ENCODE measurements at regions of chr7 and their contacts with region 1.

Region 1: GRCh38 chr7:25851332-25852210 is 300.4 kb upstream of the NFE2L3 start:
- DNase-seq: peak; percentile 79
- H3K4me3 ChIP-seq: peak overlapping the region; percentile 43
- H3K27ac ChIP-seq: peak overlapping the region; percentile 86
- H3K4me1 ChIP-seq: peaks cover 54% of the 10 kb centered on the region
- H3K27me3 ChIP-seq: peaks cover 73% of the 10 kb centered on the region
- CTCF ChIP-seq: peak; percentile 83

Region 2: DNA sequence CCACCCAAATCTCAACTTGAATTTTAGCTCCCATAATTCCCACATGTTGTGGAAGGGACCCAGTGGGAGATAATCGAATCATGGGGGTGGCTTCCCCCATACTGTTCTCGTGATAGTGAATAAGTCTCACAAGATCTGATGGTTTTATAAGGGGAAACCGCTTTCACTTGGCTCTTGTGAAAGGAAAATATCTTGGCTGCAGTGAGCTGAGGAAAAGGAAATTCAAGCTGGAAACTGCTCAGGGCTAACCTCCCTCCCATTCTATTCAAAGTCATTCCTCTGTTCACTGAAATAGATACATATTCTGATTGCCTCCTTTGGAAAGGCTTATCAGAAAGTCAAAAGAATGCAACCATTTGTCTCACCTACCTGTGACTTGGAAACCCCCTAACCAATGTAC is 742.3 kb before region 1 on chr7:
- intact Hi-C with region 1: no loop called
- DNase-seq: no peak
- H3K4me3 ChIP-seq: no peak overlapping the region
- H3K27ac ChIP-seq: no peak overlapping the region
- H3K4me1 ChIP-seq: peaks cover 4% of the 10 kb centered on the region
- H3K27me3 ChIP-seq: no peaks in the 10 kb centered on the region
- CTCF ChIP-seq: no peak

Region 3: DNA sequence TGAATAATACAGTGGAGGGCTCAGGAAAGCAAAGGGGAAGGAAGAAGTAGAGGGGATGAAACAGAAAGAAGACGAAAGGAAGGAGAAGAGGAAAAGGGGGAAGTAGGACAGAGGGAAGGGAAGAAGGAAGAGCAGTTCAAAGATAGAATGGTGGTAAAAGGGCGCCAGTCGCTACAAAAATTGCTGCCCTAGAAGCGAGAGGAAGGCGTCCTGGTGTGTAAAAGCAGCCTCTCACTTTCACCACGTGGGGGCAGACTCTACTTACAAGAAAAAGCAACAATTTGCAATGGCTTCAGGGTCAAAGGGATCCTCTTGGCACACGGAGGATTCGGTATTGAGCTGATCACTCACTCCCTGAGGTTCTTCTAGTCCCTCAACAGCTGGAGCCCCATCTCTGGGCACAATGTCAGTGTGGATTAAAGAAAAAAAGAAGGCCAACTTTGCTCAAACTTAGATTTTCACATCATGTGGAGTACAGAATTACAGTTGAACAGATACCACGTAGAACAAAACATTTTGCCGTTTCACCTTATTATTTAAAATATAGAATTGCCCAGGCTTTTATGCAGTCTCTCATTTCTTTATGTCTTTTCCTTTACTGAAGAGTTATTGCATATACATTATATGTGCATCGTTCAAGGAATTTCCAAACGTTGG is 591.9 kb before region 1 on chr7:
- intact Hi-C with region 1: loop called (anchors 5 kb)
- DNase-seq: peak; percentile 41
- H3K4me3 ChIP-seq: no peak overlapping the region
- H3K27ac ChIP-seq: no peak overlapping the region
- H3K4me1 ChIP-seq: peaks cover 8% of the 10 kb centered on the region
- H3K27me3 ChIP-seq: peaks cover 10% of the 10 kb centered on the region
- CTCF ChIP-seq: peak; percentile 88

Region 4: GRCh38 chr7:25389489-25390106 is 462.0 kb before region 1 on chr7:
- intact Hi-C with region 1: loop called (anchors 10 kb)
- DNase-seq: no peak
- H3K4me3 ChIP-seq: no peak overlapping the region
- H3K27ac ChIP-seq: no peak overlapping the region
- H3K4me1 ChIP-seq: peaks cover 19% of the 10 kb centered on the region
- H3K27me3 ChIP-seq: peaks cover 13% of the 10 kb centered on the region
- CTCF ChIP-seq: peak; percentile 64

Region 5: DNA sequence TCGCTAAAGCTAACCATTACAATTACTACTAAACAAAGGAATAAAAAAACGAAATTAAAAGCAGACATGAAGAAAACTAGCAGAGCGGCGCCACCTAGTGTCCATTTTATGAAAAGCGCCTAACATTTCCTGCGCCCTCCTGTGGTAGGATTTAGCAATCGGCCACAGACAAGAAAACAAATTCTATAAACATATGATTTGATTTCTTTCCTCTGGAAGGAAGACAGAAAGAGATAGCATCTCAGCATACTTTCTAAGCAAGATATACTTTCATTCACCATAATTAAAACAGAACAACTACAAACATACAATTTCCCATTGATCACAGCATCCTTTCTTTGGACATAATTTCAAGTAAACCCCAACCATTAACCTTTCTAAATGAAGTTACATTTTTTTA is 285.6 kb before region 1 on chr7:
- intact Hi-C with region 1: loop called (anchors 5 kb)
- DNase-seq: no peak
- H3K4me3 ChIP-seq: no peak overlapping the region
- H3K27ac ChIP-seq: no peak overlapping the region
- H3K4me1 ChIP-seq: peaks cover 5% of the 10 kb centered on the region
- H3K27me3 ChIP-seq: peaks cover 14% of the 10 kb centered on the region
- CTCF ChIP-seq: peak; percentile 100

Region 6: DNA sequence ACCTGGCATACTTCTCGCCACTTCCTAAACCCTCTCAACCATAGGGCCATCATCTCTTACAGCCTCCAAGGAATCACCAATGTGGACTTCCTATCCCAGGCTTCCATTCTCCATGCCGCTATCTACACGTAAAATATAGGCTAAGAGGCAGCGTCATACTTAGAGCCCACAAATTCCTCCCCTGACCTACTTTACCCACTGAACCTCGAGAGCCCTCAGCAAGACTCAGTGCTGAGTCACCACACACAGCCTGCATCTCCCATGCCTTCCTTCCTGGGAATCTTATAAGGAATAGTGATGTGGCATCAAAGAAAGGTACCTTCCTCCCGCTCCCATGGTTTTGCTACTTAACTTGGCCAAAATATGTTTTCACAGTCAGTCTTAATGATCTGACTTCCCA is 135.2 kb before region 1 on chr7:
- intact Hi-C with region 1: loop called (anchors 10 kb)
- DNase-seq: no peak
- H3K4me3 ChIP-seq: no peak overlapping the region
- H3K27ac ChIP-seq: no peak overlapping the region
- H3K4me1 ChIP-seq: peaks cover 28% of the 10 kb centered on the region
- H3K27me3 ChIP-seq: no peaks in the 10 kb centered on the region
- CTCF ChIP-seq: no peak

Measured in left ventricle myocardium inferior (tissue), 1 donor.